Heart left ventricle (tissue), 16 donors: ENCODE measurements at regions of chr4 and their contacts with region 1.

Region 1: DNA sequence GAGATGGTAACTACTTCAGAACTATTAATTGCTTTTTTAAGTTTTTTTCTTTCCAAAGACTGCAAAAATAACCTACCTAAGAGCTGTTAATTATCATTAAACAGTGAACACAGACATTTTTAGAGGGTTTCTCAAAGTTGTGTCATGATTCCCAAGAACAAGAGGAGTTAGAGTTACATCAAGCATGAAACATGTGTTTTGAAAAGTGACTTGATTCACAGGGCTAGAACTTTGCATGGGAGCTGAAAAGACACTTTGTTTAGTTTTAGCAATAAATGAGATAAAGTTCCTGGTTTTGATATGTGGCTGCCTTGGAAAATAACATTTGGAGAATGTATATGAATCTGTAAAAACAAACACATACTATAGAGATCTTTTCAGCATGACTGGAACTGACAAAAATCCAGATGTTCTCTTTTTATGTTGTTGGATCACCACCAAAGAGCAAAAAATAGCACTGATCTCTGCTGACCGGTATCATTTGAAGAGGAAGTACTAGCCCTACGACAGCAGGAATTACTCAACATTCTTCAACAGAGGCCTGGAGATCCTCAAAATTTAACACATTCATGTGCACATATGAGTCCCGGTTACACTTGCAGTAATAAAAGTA is 173.0 kb upstream of the PCDH18 start:
- DNase-seq: peak in 1 of 5 donors; percentile 17
- ATAC-seq: peak; percentile 68 to 88 (median 86)
- H3K4me3 ChIP-seq: no peak overlapping the region
- H3K27ac ChIP-seq: peak overlapping the region in 10 of 12 donors; percentile 4 to 73 (median 34)
- H3K4me1 ChIP-seq: peaks cover 0 to 35% (median 8%) of the 10 kb centered on the region in 12 donors
- H3K27me3 ChIP-seq: no peaks in the 10 kb centered on the region
- CTCF ChIP-seq: no peak
- POLR2A ChIP-seq: no peak

Region 2: DNA sequence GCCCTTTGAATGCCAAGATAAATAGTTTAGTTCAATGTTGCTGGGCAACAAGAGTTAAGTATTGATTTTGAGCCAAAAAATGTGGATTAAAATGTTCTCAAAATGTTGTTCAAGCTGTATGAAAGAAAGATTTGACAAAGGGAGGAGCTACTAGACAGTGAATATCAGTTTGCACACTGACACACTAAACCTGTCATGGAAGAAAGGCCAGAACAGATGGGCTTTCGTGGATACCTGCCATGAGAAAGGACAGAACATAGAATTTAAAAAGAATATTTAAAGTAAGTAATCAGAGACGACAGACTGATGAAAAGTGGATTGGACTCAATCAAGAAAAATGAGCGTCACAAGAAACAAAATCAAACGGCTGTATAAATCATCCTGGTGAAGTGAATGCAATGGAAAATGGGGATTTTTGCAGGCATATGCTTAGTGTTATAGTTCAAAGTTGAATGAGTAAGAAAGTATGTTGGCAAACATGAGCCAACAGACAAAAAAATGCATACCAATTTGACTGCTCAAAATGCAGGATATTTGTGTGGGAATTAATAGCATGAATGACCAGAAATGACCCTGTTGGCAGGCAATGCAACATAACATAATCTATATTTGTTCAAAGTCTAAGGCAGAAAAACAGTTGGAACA is 180.4 kb before region 1 on chr4:
- intact Hi-C with region 1: loop called in 2 of 10 experiments (anchors 10 kb)
- DNase-seq: no peak
- ATAC-seq: no peak
- H3K4me3 ChIP-seq: peak overlapping the region in 1 of 12 donors; percentile 25
- H3K27ac ChIP-seq: peak overlapping the region in 1 of 12 donors; percentile 6
- H3K4me1 ChIP-seq: peaks cover 0 to 28% (median 0%) of the 10 kb centered on the region in 12 donors
- H3K27me3 ChIP-seq: no peaks in the 10 kb centered on the region
- CTCF ChIP-seq: no peak
- POLR2A ChIP-seq: no peak

Region 3: DNA sequence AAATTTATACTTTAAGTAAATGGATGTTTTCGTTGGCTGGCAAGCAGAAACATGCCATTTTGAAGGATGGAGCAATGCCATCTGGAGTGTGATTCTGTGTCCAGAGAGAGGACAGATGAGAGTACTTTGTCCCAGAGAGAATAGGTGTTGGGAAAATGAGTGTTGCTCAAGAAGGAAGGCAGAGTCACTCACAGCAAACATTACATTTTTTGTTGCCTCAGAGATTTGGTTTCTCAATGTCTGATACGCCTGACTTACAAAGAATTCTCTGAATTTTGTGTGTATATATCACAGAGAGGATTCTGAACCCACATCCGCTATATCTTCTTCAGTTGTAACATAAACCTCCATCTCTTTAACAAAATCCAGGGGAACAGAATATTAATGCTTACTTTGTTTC is 70.2 kb before region 1 on chr4:
- intact Hi-C with region 1: loop called in 1 of 10 experiments (anchors 10 kb)
- DNase-seq: no peak
- ATAC-seq: peak in 2 of 4 donors; percentile 44 to 64
- H3K4me3 ChIP-seq: no peak overlapping the region
- H3K27ac ChIP-seq: no peak overlapping the region
- H3K4me1 ChIP-seq: no peaks in the 10 kb centered on the region
- H3K27me3 ChIP-seq: no peaks in the 10 kb centered on the region
- CTCF ChIP-seq: no peak
- POLR2A ChIP-seq: no peak

Region 4: GRCh38 chr4:137678796-137679195 is 26.5 kb before region 1 on chr4:
- intact Hi-C with region 1: loop called in 1 of 10 experiments (anchors 2 kb)
- DNase-seq: no peak
- ATAC-seq: no peak
- H3K4me3 ChIP-seq: no peak overlapping the region
- H3K27ac ChIP-seq: no peak overlapping the region
- H3K4me1 ChIP-seq: peaks cover 0 to 6% (median 0%) of the 10 kb centered on the region in 12 donors
- H3K27me3 ChIP-seq: no peaks in the 10 kb centered on the region
- CTCF ChIP-seq: no peak
- POLR2A ChIP-seq: no peak